ENCODE measurements at regions of chr11 and their contacts with region 1.

Region 1: DNA sequence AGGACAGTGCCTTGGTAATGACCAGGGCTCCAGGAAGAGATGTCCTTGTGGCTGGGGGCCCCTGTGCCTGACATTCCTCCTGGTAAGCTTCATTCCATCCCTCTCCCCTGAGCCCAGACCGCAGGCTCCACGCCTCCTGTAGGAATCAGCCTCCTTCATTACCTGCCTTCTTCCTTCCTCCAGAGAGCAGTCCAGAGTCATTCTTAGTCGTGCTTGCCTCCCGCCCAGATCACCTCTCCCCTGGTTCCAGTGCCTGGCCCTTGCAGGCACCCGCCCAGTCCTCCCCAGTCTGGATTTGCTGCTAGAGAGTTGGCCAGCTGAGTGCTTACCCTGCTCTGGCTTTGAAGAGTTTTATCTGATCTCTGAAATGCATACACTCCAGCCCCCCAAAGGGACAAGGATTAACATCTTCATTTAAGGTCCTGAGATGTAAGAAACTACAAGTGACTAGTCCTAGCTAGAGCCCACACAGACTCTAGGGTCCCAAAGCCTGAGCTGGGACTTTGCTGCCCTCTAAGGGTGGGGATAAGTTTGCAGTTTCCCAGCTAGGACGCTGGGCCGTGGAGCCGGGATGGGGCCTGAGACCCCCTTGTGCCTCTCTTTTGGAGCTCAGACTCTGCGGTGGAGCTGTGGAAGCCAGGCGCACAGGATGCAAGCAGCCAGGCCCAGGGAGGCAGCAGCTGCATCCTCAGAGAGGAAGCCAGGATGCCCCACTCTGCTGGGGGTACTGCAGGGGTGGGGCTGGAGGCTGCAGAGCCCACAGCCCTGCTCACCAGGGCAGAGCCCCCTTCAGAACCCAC is 1.6 kb downstream of the NR1H3 start:
- DNase-seq: peak; percentile 57
- H3K4me3 Mint-ChIP-seq: no peak overlapping the region
- H3K27ac Mint-ChIP-seq: peak overlapping the region; percentile 66
- H3K4me1 Mint-ChIP-seq: peaks cover 18% of the 10 kb centered on the region
- H3K27me3 Mint-ChIP-seq: no peaks in the 10 kb centered on the region

Region 2: DNA sequence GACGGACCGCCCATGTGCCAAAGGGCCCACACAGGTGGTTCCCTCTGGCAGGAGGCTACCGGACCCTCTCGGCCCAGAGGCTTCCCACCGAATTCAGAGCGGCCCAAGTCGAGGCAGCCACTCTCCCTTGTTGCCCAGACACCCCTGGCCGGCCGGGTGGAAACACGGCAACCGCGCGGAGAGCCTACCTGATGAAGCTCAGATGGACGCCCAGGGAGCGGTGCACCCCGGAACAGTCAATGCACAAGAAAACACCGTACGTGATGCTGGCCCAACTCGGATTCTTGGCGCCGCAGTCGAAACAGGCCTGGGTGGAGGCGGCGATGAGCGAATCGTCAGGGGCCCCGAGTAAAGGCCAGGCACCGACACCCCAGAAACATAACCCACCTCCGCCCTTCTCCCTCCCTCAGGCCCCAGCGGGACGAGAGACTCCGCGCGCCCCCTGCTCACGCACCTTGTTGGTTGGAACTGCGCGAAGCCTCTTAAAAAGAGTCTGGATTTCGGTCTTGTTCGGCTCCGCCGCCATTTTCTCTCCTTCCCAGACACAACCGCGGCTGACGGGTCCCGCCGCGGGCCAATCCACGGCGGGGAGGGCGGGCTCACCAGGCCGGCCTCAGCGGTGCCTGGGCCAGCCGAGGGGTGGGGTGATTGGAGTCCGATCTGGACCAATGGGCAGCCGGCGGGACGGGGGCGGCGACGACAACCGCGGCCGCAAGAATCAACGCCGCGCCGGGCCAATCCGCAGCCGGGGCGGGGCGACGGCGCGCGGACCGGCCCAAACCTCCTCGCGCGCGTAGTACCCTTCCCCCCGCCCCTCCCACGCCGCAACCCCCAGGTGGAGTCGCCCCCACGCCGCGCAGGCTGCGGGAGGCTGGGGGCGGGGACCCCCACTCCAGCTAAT is 82.8 kb before region 1 on chr11 and contains the start of gene ARFGAP2:
- CTCF ChIA-PET with region 1: interaction called, 26 read pairs
- DNase-seq: peak; percentile 97
- H3K4me3 Mint-ChIP-seq: peak within 1 kb of the TSS; percentile 96
- H3K27ac Mint-ChIP-seq: peak within 1 kb of the TSS; percentile 100
- H3K4me1 Mint-ChIP-seq: peaks cover 51% of the 10 kb centered on the region
- H3K27me3 Mint-ChIP-seq: no peaks in the 10 kb centered on the region

Region 3: GRCh38 chr11:47213985-47214564 is 45.3 kb before region 1 on chr11:
- CTCF ChIA-PET with region 1: interaction called, 14 read pairs
- DNase-seq: peak; percentile 92
- H3K4me3 Mint-ChIP-seq: peak overlapping the region; percentile 97
- H3K27ac Mint-ChIP-seq: peak overlapping the region; percentile 100
- H3K4me1 Mint-ChIP-seq: peaks cover 40% of the 10 kb centered on the region
- H3K27me3 Mint-ChIP-seq: peaks cover 10% of the 10 kb centered on the region

Region 4: DNA sequence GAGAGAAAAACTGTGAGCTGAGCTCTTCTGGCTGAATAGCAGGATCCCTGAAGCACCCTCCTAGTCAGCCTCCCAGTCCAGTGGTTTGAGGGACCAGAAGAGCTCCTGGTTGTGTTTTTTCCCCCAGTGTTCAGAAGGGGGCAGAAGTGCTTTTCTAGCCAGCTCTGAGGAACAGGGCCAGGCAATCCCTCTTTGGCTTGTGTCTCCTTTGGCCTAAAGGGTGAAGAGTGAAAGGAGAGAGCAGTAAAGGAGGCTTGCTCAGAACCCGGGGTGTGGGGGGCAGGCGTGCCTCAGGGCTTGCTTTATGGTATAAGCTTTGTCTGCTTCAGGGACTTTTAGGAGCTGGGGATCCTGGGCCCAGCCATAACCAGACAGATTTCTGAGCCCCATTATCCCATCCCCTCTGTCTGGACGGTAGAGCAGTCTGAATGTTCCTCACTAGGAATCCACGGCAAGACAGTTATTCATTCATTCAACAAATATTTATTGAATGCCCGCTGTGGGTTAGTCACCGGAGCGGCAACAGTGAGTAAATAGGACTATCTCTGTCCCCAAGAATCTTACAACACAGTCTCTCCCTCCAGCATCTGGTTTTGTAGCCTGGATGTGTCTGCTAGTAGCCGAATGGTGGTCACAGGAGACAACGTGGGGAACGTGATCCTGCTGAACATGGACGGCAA is 25.2 kb before region 1 on chr11:
- CTCF ChIA-PET with region 1: interaction called, 16 read pairs
- DNase-seq: peak; percentile 45
- H3K4me3 Mint-ChIP-seq: no peak overlapping the region
- H3K27ac Mint-ChIP-seq: peak overlapping the region; percentile 91
- H3K4me1 Mint-ChIP-seq: peaks cover 31% of the 10 kb centered on the region
- H3K27me3 Mint-ChIP-seq: no peaks in the 10 kb centered on the region

Region 5: DNA sequence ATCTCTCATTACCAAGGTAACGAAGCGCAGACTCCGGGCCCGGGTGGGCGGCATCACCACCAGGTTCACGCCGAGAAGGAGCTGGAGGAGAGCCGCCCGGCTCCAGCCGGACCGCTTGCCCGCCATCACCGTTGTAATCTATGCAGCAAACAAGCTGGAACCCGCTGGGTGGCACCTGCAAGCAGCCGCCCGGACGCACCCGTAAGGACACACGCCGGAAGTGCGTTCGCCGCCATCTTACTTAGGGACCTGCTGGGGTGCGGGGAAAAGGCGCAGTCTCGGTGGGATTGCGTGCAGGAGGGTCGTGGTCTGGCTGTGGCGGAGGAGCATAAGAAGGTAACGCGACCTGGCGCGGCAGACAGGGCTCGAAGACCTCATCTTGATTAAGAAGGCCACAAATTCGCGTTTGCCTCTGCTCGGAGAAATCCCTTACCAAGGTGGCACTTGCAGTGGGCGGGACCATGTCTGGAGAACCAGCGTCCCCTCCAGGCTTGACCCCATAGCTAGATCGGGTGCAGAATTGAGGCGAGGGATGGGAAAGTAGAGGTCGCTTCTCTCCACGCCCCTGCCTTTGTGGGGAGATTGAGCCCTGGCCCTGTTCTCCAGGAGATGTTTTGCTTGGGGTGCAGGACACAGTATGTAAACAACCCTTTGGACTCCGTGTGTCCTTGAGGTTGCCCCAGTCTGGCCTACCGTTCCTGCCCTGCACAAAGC is 10.6 kb before region 1 on chr11 and contains the start of gene ACP2:
- CTCF ChIA-PET with region 1: interaction called, 39 read pairs
- DNase-seq: peak; percentile 91
- H3K4me3 Mint-ChIP-seq: peak within 1 kb of the TSS; percentile 99
- H3K27ac Mint-ChIP-seq: peak within 1 kb of the TSS; percentile 97
- H3K4me1 Mint-ChIP-seq: peaks cover 32% of the 10 kb centered on the region
- H3K27me3 Mint-ChIP-seq: no peaks in the 10 kb centered on the region

Region 6: GRCh38 chr11:47407746-47408590 is 148.6 kb after region 1 on chr11 and contains the start of gene SLC39A13:
- CTCF ChIA-PET with region 1: interaction called, 11 read pairs
- DNase-seq: peak; percentile 92
- H3K4me3 Mint-ChIP-seq: peak within 1 kb of the TSS; percentile 92
- H3K27ac Mint-ChIP-seq: peak within 1 kb of the TSS; percentile 90
- H3K4me1 Mint-ChIP-seq: peaks cover 30% of the 10 kb centered on the region
- H3K27me3 Mint-ChIP-seq: peaks cover 8% of the 10 kb centered on the region